ENCODE measurements at regions of chr4 and their contacts with region 1.

Region 1: DNA sequence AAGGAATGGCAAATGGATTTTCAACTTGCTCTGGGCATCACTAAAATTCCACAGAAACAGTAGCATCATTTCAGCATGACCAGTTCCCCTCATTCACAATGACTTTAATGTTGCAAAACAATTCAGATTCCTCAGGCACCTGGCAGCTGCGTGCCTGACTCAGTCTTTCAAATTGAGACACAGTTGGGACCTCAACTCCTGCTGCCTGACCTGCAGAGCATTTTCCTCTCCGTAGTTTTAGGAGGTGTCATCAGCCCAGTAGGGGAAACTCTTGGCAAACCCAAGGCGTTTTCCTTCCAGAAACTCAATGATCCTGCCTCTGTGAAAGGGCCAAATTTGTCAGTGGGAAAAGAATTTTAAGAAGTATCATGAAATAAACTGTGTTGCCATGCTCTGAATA is 388.9 kb downstream of the SPRY1 start:
- DNase-seq: peak; percentile 96
- ATAC-seq: peak; percentile 16
- H3K4me3 ChIP-seq: no peak overlapping the region
- H3K27ac ChIP-seq: peak overlapping the region; percentile 49; the same call in 1 of the 2 replicates
- H3K4me1 ChIP-seq: peaks cover 21% of the 10 kb centered on the region
- H3K27me3 ChIP-seq: no peaks in the 10 kb centered on the region
- CTCF ChIP-seq: no peak
- POLR2A ChIP-seq: no peak
- RAD21 ChIP-seq: no peak

Region 2: DNA sequence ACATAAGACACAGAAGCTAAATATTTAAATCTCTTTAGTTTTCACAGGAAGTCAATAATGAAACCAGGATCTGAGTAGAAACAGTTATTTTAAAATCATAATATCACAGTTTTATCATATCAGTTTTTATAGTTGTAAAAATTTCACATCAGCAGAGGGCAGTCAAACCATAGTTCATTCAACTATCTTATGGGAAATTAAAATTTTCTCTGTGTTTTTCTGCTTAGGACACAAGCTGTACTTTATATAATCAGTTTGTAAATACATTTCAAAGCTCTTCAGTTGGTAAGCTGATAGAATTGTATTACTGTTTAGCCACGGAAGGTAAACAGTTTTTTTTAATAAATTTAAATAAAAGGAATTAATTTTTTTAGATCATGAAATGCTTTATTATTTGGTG is 658.3 kb before region 1 on chr4:
- CTCF ChIA-PET with region 1: no interaction called
- POLR2A ChIA-PET with region 1: no interaction called
- dilution Hi-C with region 1: no loop called
- in situ Hi-C with region 1: no loop called
- intact Hi-C with region 1: loop called (anchors 5 kb)
- DNase-seq: peak; percentile 42
- ATAC-seq: peak; percentile 83
- H3K4me3 ChIP-seq: no peak overlapping the region
- H3K27ac ChIP-seq: no peak overlapping the region
- H3K4me1 ChIP-seq: no peaks in the 10 kb centered on the region
- H3K27me3 ChIP-seq: no peaks in the 10 kb centered on the region
- CTCF ChIP-seq: peak; percentile 56
- POLR2A ChIP-seq: no peak
- RAD21 ChIP-seq: peak; percentile 61

Region 3: GRCh38 chr4:123699880-123700771 is 85.4 kb before region 1 on chr4:
- CTCF ChIA-PET with region 1: no interaction called
- POLR2A ChIA-PET with region 1: no interaction called
- dilution Hi-C with region 1: no loop called
- in situ Hi-C with region 1: no loop called
- intact Hi-C with region 1: loop called (anchors 2 kb)
- DNase-seq: peak; percentile 93
- ATAC-seq: peak; percentile 92
- H3K4me3 ChIP-seq: peak overlapping the region; percentile 44; the same call in 1 of the 2 replicates
- H3K27ac ChIP-seq: peak overlapping the region; percentile 98
- H3K4me1 ChIP-seq: peaks cover 3% of the 10 kb centered on the region; the same call in 1 of the 2 replicates
- H3K27me3 ChIP-seq: no peaks in the 10 kb centered on the region
- CTCF ChIP-seq: no peak
- POLR2A ChIP-seq: no peak
- RAD21 ChIP-seq: no peak

Region 4: DNA sequence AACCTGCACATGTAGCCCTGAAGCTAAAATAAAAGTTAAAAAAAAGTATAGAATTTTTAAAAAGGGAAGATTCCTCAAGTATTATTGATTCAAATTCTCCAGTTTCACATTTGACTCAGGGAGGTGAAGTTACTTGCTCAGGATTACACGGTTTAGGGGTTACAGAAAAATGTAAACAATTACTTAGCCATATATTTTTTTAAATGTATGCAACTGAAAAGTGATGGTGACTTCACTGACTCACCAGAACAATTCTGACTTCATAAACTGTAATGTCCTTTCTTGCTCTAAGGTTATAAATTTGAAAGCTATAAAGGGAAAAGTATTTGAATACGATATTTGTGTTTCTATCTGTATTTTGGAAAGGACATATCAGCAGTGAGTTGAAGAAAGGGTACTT is 17.7 kb before region 1 on chr4:
- CTCF ChIA-PET with region 1: interaction called, 4 read pairs
- POLR2A ChIA-PET with region 1: no interaction called
- dilution Hi-C with region 1: no loop called
- in situ Hi-C with region 1: no loop called
- intact Hi-C with region 1: loop called (anchors 1 kb)
- DNase-seq: peak; percentile 80
- ATAC-seq: peak; percentile 79
- H3K4me3 ChIP-seq: no peak overlapping the region
- H3K27ac ChIP-seq: peak overlapping the region; percentile 89; the same call in 1 of the 2 replicates
- H3K4me1 ChIP-seq: peaks cover 3% of the 10 kb centered on the region
- H3K27me3 ChIP-seq: no peaks in the 10 kb centered on the region
- CTCF ChIP-seq: no peak
- POLR2A ChIP-seq: no peak
- RAD21 ChIP-seq: no peak

Region 5: GRCh38 chr4:123817025-123817688 is 31.6 kb after region 1 on chr4:
- CTCF ChIA-PET with region 1: no interaction called
- POLR2A ChIA-PET with region 1: no interaction called
- dilution Hi-C with region 1: no loop called
- in situ Hi-C with region 1: no loop called
- intact Hi-C with region 1: loop called (anchors 1 kb)
- DNase-seq: no peak
- ATAC-seq: no peak
- H3K4me3 ChIP-seq: no peak overlapping the region
- H3K27ac ChIP-seq: no peak overlapping the region
- H3K4me1 ChIP-seq: no peaks in the 10 kb centered on the region
- H3K27me3 ChIP-seq: no peaks in the 10 kb centered on the region
- CTCF ChIP-seq: no peak
- POLR2A ChIP-seq: no peak
- RAD21 ChIP-seq: no peak

Region 6: GRCh38 chr4:123832173-123833026 is 46.9 kb after region 1 on chr4:
- CTCF ChIA-PET with region 1: no interaction called
- POLR2A ChIA-PET with region 1: no interaction called
- dilution Hi-C with region 1: no loop called
- in situ Hi-C with region 1: no loop called
- intact Hi-C with region 1: loop called (anchors 2 kb)
- DNase-seq: peak; percentile 100
- ATAC-seq: peak; percentile 84
- H3K4me3 ChIP-seq: no peak overlapping the region
- H3K27ac ChIP-seq: peak overlapping the region; percentile 83
- H3K4me1 ChIP-seq: peaks cover 14% of the 10 kb centered on the region
- H3K27me3 ChIP-seq: no peaks in the 10 kb centered on the region
- CTCF ChIP-seq: no peak
- POLR2A ChIP-seq: no peak
- RAD21 ChIP-seq: no peak

Measured in IMR-90 (cell line).